Activated naive CD4-positive, alpha-beta T cell treated with anti-CD3 and anti-CD28 coated beads, Interleukin-2, amount 10 ng/mL, durations not matched to agents 7 days and 5 days (primary cell): ENCODE measurements at regions of chr2 and their contacts with region 1.

Region 1: DNA sequence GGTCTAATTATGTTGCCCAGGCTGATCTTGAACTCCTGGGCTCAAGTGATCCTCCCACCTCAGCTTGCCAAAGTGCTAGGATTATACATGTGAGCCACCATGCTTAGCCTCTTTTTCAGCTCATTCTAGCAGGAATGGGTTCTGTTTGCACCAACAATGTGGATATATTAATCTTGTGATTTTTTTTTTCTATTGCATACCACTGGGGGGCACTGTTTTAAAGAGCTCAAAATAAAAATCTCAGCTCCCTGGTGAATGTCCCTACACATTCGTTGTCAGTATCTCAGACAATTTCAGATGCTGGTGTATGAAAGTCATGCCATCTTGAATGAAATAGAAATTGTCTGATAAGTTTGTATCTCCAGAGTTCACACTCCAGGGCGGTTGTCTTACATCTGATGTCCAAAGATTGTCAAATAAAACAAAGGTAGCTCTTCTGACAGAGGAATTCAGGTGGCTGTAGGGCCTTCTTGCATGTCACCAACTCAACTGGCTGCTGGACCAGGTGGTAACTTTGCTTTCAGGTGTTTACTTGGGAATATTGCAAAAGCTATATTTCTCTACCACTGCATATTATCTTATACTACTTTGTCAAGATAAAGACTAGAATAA is 3.1 kb upstream of the MATN3 start:
- DNase-seq: no peak
- H3K4me3 Mint-ChIP-seq: no peak overlapping the region
- H3K27ac Mint-ChIP-seq: no peak overlapping the region
- H3K4me1 Mint-ChIP-seq: peaks cover 12% of the 10 kb centered on the region
- H3K27me3 Mint-ChIP-seq: peaks cover 44% of the 10 kb centered on the region

Region 2: DNA sequence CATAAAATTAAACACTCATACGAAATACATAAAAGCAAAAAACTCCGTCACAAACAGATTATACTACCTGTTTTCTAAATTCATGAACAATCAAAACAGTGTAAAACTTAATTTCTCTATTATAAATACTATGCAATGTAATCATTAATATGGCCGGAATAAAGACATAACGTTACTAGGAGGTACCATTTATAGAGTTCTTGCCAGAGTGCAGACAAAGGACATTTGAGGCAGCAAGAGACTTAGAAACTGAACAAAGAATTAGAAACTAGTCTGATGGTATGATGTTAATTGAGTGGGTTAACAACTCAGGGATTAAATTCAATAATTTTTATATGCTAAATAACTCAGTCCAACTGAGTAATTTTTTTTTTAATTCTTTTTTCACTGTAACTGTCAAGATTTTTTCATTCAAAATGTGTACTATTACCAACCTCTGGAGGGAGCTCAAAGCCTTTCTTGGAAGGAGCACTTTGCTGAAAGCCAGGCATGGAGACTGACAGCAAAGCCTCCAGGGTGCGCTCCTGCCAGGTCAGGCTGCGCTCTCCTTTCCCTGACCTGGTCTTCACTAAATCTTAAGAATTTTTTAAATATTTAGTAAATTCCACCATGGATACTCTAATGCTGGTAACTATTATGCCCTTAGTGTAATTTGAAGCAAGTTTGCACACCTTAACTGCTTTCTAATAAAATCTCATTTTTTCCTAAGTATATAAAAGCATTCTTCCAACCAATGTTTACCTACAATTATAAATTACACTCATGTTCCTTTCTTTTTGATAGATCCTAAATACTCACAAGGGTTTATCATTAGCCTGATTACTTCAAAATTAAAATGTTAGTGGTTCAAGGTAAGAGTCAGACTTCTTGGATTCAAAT is 59.8 kb before region 1 on chr2:
- CTCF ChIA-PET with region 1: interaction called, 11 read pairs
- DNase-seq: peak; percentile 66
- H3K4me3 Mint-ChIP-seq: no peak overlapping the region
- H3K27ac Mint-ChIP-seq: no peak overlapping the region
- H3K4me1 Mint-ChIP-seq: no peaks in the 10 kb centered on the region
- H3K27me3 Mint-ChIP-seq: no peaks in the 10 kb centered on the region

Region 3: DNA sequence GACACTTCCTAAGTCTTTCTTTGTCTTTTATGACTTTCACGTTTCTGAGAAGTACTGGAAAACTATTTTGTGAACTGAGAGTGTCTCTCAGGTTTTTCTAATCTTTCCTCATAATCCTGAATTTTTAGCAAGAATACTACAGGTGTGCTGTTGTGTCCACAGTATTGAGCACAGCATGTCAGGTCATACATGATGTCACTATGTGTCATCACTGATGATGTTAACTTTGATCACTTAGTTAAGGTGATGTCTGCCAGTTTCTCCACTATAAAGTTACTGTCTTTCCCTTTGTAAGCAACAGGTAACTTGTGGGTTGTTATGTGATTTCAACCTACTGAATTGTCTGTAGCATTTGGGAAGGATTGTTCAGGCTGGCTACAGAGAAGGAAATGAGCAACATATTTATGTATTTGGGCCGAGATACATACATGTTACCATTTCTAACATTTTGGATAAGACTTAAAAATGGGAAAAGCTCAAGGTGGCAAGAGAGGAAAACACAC is 14.2 kb before region 1 on chr2:
- CTCF ChIA-PET with region 1: interaction called, 17 read pairs
- DNase-seq: no peak
- H3K4me3 Mint-ChIP-seq: no peak overlapping the region
- H3K27ac Mint-ChIP-seq: no peak overlapping the region
- H3K4me1 Mint-ChIP-seq: no peaks in the 10 kb centered on the region
- H3K27me3 Mint-ChIP-seq: peaks cover 30% of the 10 kb centered on the region

Region 4: GRCh38 chr2:20035955-20036666 is 20.5 kb after region 1 on chr2:
- CTCF ChIA-PET with region 1: interaction called, 15 read pairs
- DNase-seq: no peak
- H3K4me3 Mint-ChIP-seq: no peak overlapping the region
- H3K27ac Mint-ChIP-seq: peak overlapping the region; percentile 9
- H3K4me1 Mint-ChIP-seq: peaks cover 7% of the 10 kb centered on the region
- H3K27me3 Mint-ChIP-seq: no peaks in the 10 kb centered on the region

Region 5: DNA sequence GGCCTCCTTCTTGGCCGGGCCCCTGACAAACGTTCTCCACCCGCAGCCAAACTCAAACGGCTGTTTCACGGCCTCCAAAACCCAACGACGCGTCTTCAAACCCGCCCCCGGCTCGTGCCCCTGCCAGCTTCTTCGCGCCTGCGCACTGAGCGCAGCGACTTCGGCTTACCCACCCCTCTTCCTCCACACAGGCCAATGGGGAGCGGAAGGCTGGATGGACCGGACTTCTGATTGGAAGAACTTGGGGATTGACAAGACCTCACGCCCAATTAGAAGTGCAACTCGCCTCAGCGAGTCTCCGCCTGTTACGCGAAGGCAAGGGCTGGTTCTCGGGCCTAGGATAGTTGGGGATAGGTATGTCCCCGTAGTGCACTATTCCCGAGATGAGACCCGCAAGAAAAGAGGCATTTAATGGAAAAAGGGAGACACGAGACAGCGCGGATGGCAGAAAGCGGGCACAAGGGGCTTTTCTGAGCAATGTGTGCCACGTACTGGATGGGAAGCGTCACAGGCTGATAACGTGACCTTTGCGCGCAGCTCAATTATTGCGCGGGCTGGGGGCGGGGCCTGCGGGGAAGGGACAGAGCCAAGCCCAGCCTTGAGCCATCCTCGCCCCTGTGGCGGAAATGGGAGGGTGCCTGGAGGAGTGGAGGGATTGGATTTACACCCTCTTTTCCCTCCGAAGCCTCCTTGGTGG is 36.1 kb after region 1 on chr2 and contains the start of gene LAPTM4A:
- CTCF ChIA-PET with region 1: interaction called, 16 read pairs
- DNase-seq: peak; percentile 99
- H3K4me3 Mint-ChIP-seq: no peak within 1 kb of the TSS
- H3K27ac Mint-ChIP-seq: no peak within 1 kb of the TSS
- H3K4me1 Mint-ChIP-seq: peaks cover 25% of the 10 kb centered on the region
- H3K27me3 Mint-ChIP-seq: peaks cover 24% of the 10 kb centered on the region

Region 6: DNA sequence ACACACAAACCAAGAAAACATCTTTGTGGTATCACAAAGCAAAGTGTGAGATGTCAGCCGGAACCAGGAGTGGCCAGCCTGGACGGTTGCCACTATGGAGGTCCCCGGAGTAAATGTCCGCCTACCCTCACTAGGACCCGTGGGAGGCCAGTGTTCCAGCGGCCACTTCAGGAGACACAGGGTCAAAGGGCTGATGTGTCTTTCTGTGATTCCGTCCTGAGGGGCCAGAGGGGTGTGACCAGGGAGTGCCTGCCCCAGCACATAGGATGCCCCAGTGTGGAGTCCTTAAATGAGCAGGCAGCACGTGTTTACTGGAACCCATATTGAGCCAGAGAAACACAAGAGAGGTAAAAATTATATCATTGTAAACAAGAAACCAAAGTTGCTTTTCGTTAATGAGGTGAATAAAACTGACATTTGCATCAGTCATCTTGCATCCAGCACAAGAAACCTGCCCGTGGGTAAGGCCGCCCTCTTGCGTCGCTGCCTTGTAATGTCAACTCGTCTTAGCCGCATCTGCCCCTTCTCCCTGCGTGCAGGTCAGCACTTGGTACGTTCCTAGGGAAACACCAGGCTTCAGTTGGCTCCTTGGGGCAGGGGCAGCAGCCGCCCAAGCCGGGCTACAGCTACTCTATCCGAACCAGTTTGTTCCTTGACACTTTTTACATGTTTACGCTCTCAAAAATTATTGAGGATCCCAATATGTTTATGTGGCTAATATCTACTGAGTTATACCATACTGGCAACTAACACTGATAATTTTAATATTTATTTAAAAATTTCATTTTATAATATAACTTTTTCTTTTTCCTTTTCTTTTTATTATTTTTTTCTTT is 82.5 kb after region 1 on chr2:
- CTCF ChIA-PET with region 1: interaction called, 20 read pairs
- DNase-seq: peak; percentile 85
- H3K4me3 Mint-ChIP-seq: no peak overlapping the region
- H3K27ac Mint-ChIP-seq: no peak overlapping the region
- H3K4me1 Mint-ChIP-seq: no peaks in the 10 kb centered on the region
- H3K27me3 Mint-ChIP-seq: peaks cover 43% of the 10 kb centered on the region